ENCODE measurements at regions of chr1 and their contacts with region 1.

Region 1: GRCh38 chr1:176374967-176375569 is 87.9 kb upstream of the PAPPA2 start:
- DNase-seq: peak; percentile 78 to 86 (median 81)
- ATAC-seq: peak; percentile 83
- H3K4me3 ChIP-seq: no peak overlapping the region
- H3K27ac ChIP-seq: no peak overlapping the region
- H3K4me1 ChIP-seq: no peaks in the 10 kb centered on the region
- H3K27me3 ChIP-seq: no peaks in the 10 kb centered on the region
- CTCF ChIP-seq: peak; percentile 55 to 85 (median 77)
- POLR2A ChIP-seq: no peak

Region 2: DNA sequence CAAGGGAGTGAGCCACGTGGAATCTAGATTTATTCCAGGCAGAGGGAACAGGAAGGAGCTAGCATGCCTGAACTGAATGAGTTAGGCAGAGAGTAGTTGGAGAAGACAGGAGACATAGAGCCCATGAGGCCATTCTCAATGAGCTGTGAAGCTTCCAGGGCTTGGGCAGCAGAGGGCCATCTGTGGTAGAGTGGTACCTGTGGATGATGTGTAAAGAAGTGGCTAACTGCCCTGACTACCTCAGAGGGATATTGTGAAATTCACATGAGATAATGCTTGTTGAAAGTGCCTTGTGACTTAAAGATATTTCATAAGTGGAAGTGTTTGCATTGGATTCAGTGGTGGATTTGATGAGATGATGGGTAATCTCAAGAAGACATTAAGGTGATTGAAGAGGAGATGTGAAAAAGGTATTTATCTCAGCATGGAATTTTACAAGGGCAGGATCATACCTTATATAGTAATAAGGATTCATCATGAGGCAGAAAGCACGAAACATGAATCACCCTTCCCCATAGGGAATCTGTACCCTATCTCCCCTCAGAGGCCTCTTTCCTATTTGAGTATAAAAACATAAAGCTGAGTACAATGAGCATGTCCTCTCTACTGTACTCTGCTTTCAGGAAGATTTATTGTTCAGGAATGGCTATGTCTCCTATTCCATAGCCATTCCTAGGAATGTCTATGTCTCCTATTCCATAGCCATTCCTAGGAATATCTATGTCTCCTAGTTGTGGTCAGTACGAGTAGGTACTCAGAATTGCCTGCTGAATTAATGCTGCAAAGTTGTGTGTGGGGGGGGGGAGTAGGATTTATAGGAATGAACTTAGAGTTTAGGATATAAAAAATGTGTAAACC is 234.7 kb after region 1 on chr1:
- intact Hi-C with region 1: no loop called
- DNase-seq: peak in 3 of 4 donors; percentile 17 to 59 (median 24)
- ATAC-seq: peak; percentile 78
- H3K4me3 ChIP-seq: no peak overlapping the region
- H3K27ac ChIP-seq: peak overlapping the region in 2 of 4 donors; percentile 4 to 20
- H3K4me1 ChIP-seq: peaks cover 6% of the 10 kb centered on the region
- H3K27me3 ChIP-seq: no peaks in the 10 kb centered on the region
- CTCF ChIP-seq: peak in 2 of 7 experiments; percentile 12 to 30
- POLR2A ChIP-seq: no peak

Region 3: DNA sequence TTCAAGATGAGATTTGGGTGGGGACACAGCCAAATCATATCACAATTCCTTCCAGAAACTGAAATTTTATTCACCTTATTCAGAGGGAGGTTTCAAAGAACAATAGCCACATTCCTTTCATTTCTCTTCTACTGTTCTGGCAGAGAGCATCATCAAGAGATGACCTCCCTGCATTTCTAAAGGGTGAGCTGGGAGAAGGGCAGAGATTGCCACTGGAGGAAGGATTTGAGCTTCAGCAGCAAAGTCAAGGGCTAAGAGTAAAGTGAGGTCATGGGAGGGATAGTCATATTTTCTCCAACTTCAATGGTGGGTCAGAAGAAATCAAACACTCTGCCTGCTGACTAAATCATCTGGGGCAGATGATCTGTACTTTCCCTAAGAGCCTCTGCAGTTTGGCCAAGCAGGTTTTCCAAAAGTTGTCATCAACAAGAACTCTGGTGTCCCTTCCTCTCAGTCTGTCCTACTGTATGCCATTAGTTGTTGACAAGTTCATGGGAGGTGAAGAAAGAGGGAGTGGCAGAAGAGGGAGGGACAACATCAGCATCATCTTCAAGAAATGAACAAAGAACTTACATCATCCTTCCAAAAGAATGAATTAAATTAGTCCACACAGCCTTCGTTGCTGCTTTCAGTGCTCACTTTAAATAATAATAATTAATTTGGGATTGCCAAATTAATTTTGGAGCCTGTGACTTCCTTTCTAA is 491.1 kb after region 1 on chr1:
- intact Hi-C with region 1: loop called (anchors 10 kb)
- DNase-seq: no peak
- ATAC-seq: no peak
- H3K4me3 ChIP-seq: no peak overlapping the region
- H3K27ac ChIP-seq: no peak overlapping the region
- H3K4me1 ChIP-seq: no peaks in the 10 kb centered on the region
- H3K27me3 ChIP-seq: no peaks in the 10 kb centered on the region
- CTCF ChIP-seq: no peak
- POLR2A ChIP-seq: no peak

Measured in body of pancreas (tissue), 4 donors.